ENCODE measurements at regions of chr11 and their contacts with region 1.

Region 1: GRCh38 chr11:102287964-102288724 is 29.1 kb upstream of the BIRC3 start:
- DNase-seq: peak; percentile 33
- H3K4me3 Mint-ChIP-seq: peak overlapping the region; percentile 38
- H3K27ac Mint-ChIP-seq: no peak overlapping the region
- H3K4me1 Mint-ChIP-seq: peaks cover 25% of the 10 kb centered on the region
- H3K27me3 Mint-ChIP-seq: no peaks in the 10 kb centered on the region

Region 2: DNA sequence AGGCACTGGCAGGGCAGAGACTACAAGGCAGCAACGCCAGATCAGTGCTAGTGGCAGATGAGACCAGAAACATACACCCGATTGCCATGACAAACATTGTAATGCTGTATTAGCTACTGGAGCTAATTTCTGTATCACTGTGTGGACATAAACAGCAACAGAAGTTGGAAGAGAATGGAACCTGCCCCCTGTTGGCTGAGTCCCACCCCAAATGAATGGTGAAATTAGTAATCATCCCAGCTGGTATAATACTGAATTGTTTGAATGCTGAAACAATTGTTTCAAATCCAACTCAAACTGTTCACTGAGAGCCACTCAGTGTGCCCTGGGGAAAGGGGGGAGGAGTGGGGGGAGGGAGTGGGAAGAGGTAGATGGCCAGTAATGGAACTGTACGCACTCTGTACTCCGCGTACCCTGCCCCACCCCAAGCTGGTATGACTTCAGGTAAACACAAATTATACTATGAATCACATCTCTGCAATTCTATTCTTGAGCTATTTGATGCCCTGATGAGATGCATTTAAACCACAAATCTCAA is 18.0 kb after region 1 on chr11:
- CTCF ChIA-PET with region 1: interaction called, 288 read pairs
- POLR2A ChIA-PET with region 1: no interaction called
- intact Hi-C with region 1: no loop called
- DNase-seq: peak; percentile 52
- H3K4me3 Mint-ChIP-seq: peak overlapping the region; percentile 59
- H3K27ac Mint-ChIP-seq: peak overlapping the region; percentile 85
- H3K4me1 Mint-ChIP-seq: peaks cover 69% of the 10 kb centered on the region
- H3K27me3 Mint-ChIP-seq: no peaks in the 10 kb centered on the region

Region 3: GRCh38 chr11:102323542-102324251 is 35.6 kb after region 1 on chr11:
- CTCF ChIA-PET with region 1: interaction called, 288 read pairs
- POLR2A ChIA-PET with region 1: interaction called, 14 read pairs
- intact Hi-C with region 1: loop called (anchors 1 kb)
- DNase-seq: no peak
- H3K4me3 Mint-ChIP-seq: no peak overlapping the region
- H3K27ac Mint-ChIP-seq: peak overlapping the region; percentile 72
- H3K4me1 Mint-ChIP-seq: peaks cover 51% of the 10 kb centered on the region
- H3K27me3 Mint-ChIP-seq: no peaks in the 10 kb centered on the region

Region 4: DNA sequence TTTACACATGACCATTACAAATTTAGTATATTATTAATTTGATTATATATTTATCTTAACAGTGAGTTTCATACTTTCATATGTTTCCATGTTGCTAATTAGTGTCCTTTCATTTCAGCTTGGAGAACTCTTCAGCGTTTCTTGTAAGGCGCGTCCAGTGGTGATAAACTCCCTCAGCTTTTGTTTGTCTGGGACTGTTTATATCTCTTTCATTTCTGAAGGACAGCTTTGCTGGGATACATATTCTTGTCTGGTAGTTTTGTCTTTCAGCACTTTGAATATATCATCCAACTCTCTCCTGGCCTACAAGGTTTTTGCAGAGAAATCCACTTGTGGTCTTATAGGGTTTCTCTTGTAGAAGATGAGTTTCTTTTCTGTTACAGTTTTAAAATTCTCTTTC is 71.2 kb after region 1 on chr11:
- CTCF ChIA-PET with region 1: no interaction called
- POLR2A ChIA-PET with region 1: no interaction called
- intact Hi-C with region 1: no loop called
- DNase-seq: no peak
- H3K4me3 Mint-ChIP-seq: no peak overlapping the region
- H3K27ac Mint-ChIP-seq: no peak overlapping the region
- H3K4me1 Mint-ChIP-seq: peaks cover 55% of the 10 kb centered on the region
- H3K27me3 Mint-ChIP-seq: no peaks in the 10 kb centered on the region

Region 5: GRCh38 chr11:102451681-102452460 is 163.7 kb after region 1 on chr11:
- CTCF ChIA-PET with region 1: interaction called, 4 read pairs
- POLR2A ChIA-PET with region 1: no interaction called
- intact Hi-C with region 1: loop called (anchors 1 kb)
- DNase-seq: peak; percentile 86
- H3K4me3 Mint-ChIP-seq: peak overlapping the region; percentile 84
- H3K27ac Mint-ChIP-seq: peak overlapping the region; percentile 96
- H3K4me1 Mint-ChIP-seq: peaks cover 75% of the 10 kb centered on the region
- H3K27me3 Mint-ChIP-seq: no peaks in the 10 kb centered on the region

Region 6: GRCh38 chr11:102614485-102614884 is 326.3 kb after region 1 on chr11:
- CTCF ChIA-PET with region 1: interaction called, 22 read pairs
- POLR2A ChIA-PET with region 1: no interaction called
- intact Hi-C with region 1: loop called (anchors 1 kb)
- DNase-seq: no peak
- H3K4me3 Mint-ChIP-seq: no peak overlapping the region
- H3K27ac Mint-ChIP-seq: no peak overlapping the region
- H3K4me1 Mint-ChIP-seq: peaks cover 10% of the 10 kb centered on the region
- H3K27me3 Mint-ChIP-seq: no peaks in the 10 kb centered on the region